PC-3 (cell line): ENCODE measurements at regions of chr10 and their contacts with region 1.

Region 1: DNA sequence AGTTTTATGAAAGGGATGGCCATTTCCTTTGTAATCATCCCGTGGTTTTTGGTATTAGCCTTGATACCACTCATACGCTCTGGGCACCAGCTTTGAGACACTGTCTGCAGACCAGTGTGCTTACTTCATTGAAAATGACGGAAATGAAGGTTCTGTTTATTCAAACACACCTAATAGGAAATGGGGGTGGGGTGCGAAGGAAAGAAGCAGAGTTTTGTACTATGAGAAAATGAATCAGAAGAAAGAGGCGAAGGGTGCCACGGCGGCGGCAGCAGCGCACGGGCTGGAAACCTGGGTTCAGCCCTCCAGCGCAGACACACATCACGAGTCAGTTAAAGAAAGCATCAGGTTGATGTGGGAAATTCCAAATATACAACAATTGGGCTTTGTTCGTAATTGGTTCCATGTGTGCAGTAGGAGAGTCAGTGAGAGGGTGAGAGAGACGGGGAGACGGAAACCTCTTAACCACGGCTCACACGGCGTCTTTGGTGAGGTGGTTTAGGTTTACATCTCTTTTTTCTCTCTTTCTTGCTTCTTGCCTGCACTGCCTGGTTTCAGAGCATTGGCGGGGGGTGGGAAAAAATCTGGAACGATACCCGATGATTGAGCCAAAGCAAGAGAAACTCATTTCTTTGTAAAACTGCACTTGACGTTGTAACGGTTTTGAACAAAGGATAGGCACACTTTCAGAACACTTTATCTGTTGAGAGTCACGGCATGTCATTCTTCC is 321.2 kb downstream of the FRMD4A start:
- DNase-seq: peak; percentile 48
- ATAC-seq: peak; percentile 42
- H3K4me3 ChIP-seq: peak overlapping the region; percentile 69
- H3K27ac ChIP-seq: peak overlapping the region; percentile 61
- H3K4me1 ChIP-seq: peaks cover 11% of the 10 kb centered on the region
- H3K27me3 ChIP-seq: no peaks in the 10 kb centered on the region
- CTCF ChIP-seq: no peak

Region 2: GRCh38 chr10:13659897-13660550 is 349.5 kb before region 1 on chr10:
- CTCF ChIA-PET with region 1: interaction called, 12 read pairs
- POLR2A ChIA-PET with region 1: no interaction called
- intact Hi-C with region 1: no loop called
- DNase-seq: peak; percentile 27
- ATAC-seq: no peak; the same call in 1 of the 2 replicates
- H3K4me3 ChIP-seq: no peak overlapping the region
- H3K27ac ChIP-seq: no peak overlapping the region
- H3K4me1 ChIP-seq: no peaks in the 10 kb centered on the region
- H3K27me3 ChIP-seq: no peaks in the 10 kb centered on the region
- CTCF ChIP-seq: peak; percentile 81

Region 3: GRCh38 chr10:13891128-13892000 is 118.2 kb before region 1 on chr10:
- CTCF ChIA-PET with region 1: no interaction called
- POLR2A ChIA-PET with region 1: no interaction called
- intact Hi-C with region 1: loop called (anchors 5 kb)
- DNase-seq: peak; percentile 25
- ATAC-seq: peak; percentile 31
- H3K4me3 ChIP-seq: peak overlapping the region; percentile 79
- H3K27ac ChIP-seq: no peak overlapping the region
- H3K4me1 ChIP-seq: peaks cover 41% of the 10 kb centered on the region
- H3K27me3 ChIP-seq: no peaks in the 10 kb centered on the region
- CTCF ChIP-seq: no peak

Region 4: DNA sequence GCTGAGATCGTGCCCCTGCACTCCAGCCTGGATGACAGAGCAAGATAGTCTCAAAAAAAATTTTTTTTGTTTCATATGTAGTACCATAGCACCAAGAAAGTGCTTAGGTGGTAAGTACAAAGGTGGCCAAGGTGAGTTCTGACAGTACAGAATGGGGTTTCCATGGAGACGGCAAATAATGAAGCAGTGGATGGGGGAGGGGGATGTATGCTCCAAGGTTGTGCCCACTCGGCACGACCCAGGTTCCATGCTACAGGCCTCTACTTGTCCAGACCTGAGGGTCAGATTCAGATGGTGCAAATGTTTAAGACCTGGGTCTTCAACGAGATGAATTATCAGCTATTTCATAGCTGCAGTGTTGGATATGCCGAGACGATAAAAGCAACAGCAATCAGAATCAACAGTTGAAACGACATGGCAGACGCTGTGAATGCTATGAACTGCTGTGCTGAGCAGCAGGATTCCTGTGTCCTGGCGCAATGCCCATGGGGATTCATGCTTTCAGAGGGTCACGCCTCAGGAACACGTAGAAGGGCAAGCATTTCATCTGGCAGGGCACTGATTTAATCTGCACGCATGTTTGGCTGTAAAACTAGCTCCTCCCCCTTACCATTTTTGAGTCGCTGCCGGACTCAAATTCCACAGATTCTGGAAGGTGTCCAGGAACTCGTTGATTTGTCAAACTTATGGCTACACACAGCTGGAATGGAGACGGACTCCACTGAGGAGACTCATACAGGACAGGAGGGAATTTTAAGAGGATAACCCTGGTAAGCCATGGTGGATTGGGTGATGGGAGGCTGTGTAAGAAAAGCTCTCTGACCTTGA is 64.7 kb after region 1 on chr10:
- CTCF ChIA-PET with region 1: no interaction called
- POLR2A ChIA-PET with region 1: no interaction called
- intact Hi-C with region 1: loop called (anchors 1 kb)
- DNase-seq: peak; percentile 95
- ATAC-seq: peak; percentile 93
- H3K4me3 ChIP-seq: peak overlapping the region; percentile 49
- H3K27ac ChIP-seq: peak overlapping the region; percentile 82
- H3K4me1 ChIP-seq: peaks cover 13% of the 10 kb centered on the region
- H3K27me3 ChIP-seq: no peaks in the 10 kb centered on the region
- CTCF ChIP-seq: no peak